Common myeloid progenitor, CD34-positive (primary cell): ENCODE measurements at regions of chr1 and their contacts with region 1.

Region 1: DNA sequence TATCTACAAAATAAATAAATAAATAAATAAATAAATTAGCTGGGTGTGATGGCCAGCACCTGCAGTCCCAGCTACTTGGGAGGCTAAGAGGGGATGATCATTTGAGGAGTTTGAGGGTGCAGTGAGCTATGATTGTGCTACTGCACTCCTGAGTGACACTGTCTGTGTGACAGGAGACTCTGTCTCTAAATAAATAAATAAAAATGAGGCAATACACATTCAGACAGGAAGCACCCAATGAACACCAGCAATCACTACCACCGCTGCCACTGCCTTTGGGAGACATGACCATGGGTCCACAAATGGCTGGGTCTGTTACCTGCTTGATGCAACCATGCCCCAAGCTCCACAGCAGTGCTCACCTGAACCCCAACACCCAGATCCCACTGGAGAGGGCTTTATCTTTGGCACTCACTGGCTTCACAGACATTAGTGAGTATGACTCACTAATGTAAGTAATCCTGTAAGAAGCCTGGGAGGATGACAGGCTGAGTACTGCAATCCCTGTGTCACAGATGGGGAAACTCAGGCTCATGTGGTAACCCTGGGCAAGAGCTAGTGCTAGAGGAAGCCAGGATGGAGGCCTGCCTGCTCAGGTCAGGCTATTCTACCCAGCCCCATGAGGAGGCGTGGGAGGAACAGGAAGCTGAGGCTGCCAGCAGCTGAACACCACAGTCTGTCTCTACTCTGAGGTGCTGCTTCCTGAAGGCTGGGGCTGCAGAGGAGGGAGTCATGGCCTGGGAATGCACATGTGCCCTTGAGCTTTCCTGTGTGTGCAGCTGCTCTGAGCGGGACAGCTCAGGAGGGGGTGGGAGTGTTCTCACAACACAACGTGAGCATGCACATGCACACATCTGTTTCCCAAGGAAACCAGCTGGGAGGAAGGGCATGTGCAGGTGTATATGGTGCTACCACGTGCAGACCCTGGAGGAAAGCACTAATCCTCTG is 43.0 kb downstream of the SLC9A1 start:
- DNase-seq: peak; percentile 87 to 98 (median 96)
- H3K4me3 ChIP-seq: no peak overlapping the region
- H3K27ac ChIP-seq: no peak overlapping the region
- H3K4me1 ChIP-seq: peaks cover 9 to 65% (median 50%) of the 10 kb centered on the region in 4 experiments
- H3K27me3 ChIP-seq: no peaks in the 10 kb centered on the region

Region 2: DNA sequence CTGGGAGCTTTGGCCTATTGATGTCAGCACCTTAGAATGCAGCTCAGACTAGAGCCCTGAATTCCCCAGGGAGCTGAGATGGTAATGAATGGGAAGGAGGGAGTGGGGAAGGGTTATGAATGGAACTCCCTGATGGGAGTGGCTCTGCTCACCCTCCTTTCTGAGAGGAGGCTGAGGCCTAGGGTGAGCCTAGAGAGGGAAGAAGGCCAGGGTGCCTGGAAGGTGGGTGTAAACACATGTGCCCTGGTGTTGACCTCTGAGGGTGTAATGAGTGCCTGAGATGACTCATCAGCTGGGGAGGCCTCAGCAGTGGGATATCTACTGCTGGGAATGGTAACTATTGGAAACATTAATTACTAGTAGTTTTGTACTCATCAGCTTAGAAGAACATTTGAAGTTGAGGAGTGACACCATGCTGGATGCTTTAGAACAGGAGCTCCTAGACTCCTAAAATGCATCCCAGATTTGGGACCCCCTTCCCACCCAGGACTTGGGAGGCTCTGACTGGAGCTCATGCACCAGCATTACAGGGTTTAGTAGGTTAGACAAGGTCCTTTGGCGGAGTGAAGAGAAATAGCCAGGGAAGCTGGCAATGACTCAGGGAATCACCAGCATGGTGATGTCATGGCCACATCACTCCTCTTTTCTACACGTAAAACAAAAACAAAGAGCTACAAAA is 340.1 kb before region 1 on chr1:
- CTCF ChIA-PET with region 1: no interaction called
- POLR2A ChIA-PET with region 1: no interaction called
- DNase-seq: no peak
- H3K4me3 ChIP-seq: no peak overlapping the region
- H3K27ac ChIP-seq: peak overlapping the region in 1 of 2 experiments; percentile 38
- H3K4me1 ChIP-seq: peaks cover 0 to 23% (median 13%) of the 10 kb centered on the region in 4 experiments
- H3K27me3 ChIP-seq: no peaks in the 10 kb centered on the region

Region 3: GRCh38 chr1:27097484-27097917 is 14.4 kb before region 1 on chr1:
- CTCF ChIA-PET with region 1: interaction called, 38 read pairs
- POLR2A ChIA-PET with region 1: no interaction called
- DNase-seq: peak; percentile 81 to 91 (median 88)
- H3K4me3 ChIP-seq: no peak overlapping the region
- H3K27ac ChIP-seq: no peak overlapping the region
- H3K4me1 ChIP-seq: peaks cover 0 to 26% (median 24%) of the 10 kb centered on the region in 4 experiments
- H3K27me3 ChIP-seq: no peaks in the 10 kb centered on the region

Region 4: DNA sequence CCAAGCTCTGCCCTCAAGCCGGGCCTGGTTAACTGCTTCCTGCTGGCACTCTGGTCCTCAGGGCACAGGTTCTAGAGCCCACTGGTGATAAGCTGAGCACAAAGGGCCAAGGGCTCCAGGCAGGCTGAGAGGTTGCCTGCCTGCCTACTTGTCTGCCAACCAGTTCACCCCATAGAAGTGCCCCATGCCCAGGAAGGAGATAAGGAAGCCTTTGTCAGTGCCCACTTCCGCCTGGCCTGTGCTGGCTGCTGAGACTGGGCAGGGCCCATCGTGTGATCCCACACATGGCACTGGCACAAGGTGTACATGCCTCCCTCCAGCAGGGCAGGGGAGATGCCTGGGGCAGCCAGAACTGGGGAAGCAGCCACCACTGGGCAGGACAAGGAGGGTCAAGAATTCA is 18.9 kb after region 1 on chr1:
- CTCF ChIA-PET with region 1: interaction called, 13 read pairs
- POLR2A ChIA-PET with region 1: no interaction called
- DNase-seq: peak; percentile 54 to 90 (median 78)
- H3K4me3 ChIP-seq: peak overlapping the region in 1 of 7 experiments; percentile 11
- H3K27ac ChIP-seq: no peak overlapping the region
- H3K4me1 ChIP-seq: peaks cover 7 to 35% (median 22%) of the 10 kb centered on the region in 4 experiments
- H3K27me3 ChIP-seq: no peaks in the 10 kb centered on the region

Region 5: DNA sequence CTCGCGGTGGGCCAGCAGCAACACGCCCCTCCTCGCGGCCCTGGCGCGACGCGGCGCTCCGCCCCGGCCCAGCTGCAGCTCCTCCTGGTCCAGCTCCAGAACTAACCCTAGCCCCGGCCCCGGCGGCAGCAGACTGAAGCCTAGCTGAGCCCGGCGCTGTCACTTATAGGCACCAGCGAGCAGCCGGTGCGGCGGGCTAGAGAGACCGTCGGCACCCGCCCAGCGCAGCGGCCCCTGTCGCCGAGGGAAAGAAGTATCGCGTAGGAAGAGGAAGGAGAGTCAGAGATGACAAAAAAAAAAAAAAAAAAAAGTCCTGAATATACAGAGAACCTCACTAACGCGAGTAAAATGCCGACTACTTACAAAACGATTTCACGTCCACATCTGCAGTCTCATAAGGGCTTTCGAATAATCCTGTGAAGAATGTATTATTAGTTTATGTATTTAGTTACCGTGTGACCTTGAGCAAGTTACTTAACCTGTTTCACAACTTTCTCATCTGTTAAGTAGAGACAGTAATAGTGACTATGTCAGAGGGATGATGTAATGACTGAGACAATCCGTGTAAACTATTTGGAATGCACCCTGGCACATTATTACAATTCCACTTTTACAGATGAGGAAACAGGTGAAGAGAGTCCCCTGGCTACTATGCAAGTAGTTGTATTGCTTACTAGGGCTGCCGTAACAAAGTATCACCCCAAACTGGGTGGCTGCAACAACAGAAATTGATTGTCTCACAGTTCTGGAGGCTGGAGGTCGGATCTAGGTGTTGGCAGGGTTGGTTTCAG is 43.3 kb after region 1 on chr1 and contains the start of gene SLC9A1:
- CTCF ChIA-PET with region 1: interaction called, 38 read pairs
- POLR2A ChIA-PET with region 1: interaction called, 15 read pairs
- DNase-seq: peak; percentile 93 to 97 (median 97)
- H3K4me3 ChIP-seq: peak within 1 kb of the TSS; percentile 67 to 91 (median 84)
- H3K27ac ChIP-seq: peak within 1 kb of the TSS; percentile 98
- H3K4me1 ChIP-seq: peaks cover 15 to 38% (median 32%) of the 10 kb centered on the region in 4 experiments
- H3K27me3 ChIP-seq: no peaks in the 10 kb centered on the region

Region 6: GRCh38 chr1:27192039-27192529 is 80.2 kb after region 1 on chr1:
- CTCF ChIA-PET with region 1: interaction called, 18 read pairs
- POLR2A ChIA-PET with region 1: no interaction called
- DNase-seq: no peak
- H3K4me3 ChIP-seq: no peak overlapping the region
- H3K27ac ChIP-seq: no peak overlapping the region
- H3K4me1 ChIP-seq: no peaks in the 10 kb centered on the region
- H3K27me3 ChIP-seq: no peaks in the 10 kb centered on the region

Region 7: DNA sequence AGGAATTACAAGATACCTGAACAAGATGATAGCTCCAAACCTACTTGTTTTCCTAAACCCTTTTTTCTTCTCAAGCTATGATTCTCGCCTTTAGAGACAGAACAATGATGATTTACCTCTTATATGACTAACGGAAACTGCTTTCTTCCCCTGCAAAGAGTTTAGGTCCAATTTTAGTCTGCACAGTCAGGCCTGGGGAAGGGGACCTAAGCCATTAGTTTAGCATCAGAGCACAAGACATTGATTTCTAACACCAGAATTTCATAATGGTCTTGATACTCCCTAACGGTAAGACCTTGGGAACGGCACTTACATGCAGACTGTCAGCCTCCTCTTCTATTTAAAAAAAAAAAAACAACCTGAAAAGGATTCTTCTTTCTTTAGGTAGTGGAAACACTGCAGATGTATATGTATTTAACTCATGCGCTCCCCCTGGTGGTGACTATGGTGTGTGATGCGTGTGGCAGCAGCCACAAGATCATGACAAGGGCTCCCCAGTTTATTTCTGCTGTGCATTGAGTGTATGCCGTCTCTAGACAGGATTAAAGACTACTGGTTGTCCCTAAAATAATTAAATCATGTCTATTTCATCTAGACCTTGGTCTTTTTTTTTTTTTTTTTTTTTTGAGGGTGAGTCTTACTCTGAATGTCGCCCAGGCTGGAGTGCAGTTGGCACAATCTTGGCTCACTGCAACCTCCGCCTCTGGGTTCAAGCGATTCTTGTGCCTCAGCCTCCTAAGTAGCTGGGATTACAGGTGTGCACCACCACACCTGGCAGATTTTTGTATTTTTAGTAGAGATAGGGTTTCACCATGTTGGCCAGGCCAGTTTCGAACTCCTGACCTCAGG is 172.7 kb after region 1 on chr1:
- CTCF ChIA-PET with region 1: interaction called, 23 read pairs
- POLR2A ChIA-PET with region 1: no interaction called
- DNase-seq: peak; percentile 81 to 92 (median 87)
- H3K4me3 ChIP-seq: no peak overlapping the region
- H3K27ac ChIP-seq: no peak overlapping the region
- H3K4me1 ChIP-seq: no peaks in the 10 kb centered on the region
- H3K27me3 ChIP-seq: no peaks in the 10 kb centered on the region